OCI-LY7 (cell line): ENCODE measurements at regions of chr22 and their contacts with region 1.

Region 1: GRCh38 chr22:23800297-23801237 is 13.8 kb downstream of the SMARCB1 start:
- DNase-seq: peak; percentile 97
- H3K4me3 ChIP-seq: peak overlapping the region; percentile 32
- H3K27ac ChIP-seq: peak overlapping the region; percentile 97
- H3K4me1 ChIP-seq: peaks cover 80% of the 10 kb centered on the region
- CTCF ChIP-seq: no peak

Region 2: DNA sequence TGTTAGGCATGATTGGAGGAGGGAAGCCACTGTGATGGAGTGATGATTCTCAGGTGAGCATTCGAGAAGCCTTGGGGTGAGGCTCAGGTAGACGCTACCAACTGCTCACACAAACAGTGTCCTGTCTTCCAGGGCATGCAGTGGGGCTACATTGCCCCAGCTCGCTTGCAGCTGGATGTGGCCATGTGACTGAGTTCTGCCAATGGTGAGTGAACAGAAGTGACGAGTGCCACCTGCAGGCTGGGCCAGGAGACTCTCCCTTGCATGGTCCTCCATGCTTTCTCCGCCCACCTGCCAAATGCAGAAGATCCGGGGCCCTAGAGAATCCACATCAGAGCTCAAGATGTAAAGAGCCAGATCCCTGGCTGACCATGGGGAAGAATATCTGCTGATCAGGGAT is 424.3 kb before region 1 on chr22:
- CTCF ChIA-PET with region 1: no interaction called
- POLR2A ChIA-PET with region 1: no interaction called
- intact Hi-C with region 1: no loop called
- DNase-seq: peak; percentile 50
- H3K4me3 ChIP-seq: no peak overlapping the region
- H3K27ac ChIP-seq: no peak overlapping the region
- H3K4me1 ChIP-seq: no peaks in the 10 kb centered on the region
- CTCF ChIP-seq: peak; percentile 62

Region 3: DNA sequence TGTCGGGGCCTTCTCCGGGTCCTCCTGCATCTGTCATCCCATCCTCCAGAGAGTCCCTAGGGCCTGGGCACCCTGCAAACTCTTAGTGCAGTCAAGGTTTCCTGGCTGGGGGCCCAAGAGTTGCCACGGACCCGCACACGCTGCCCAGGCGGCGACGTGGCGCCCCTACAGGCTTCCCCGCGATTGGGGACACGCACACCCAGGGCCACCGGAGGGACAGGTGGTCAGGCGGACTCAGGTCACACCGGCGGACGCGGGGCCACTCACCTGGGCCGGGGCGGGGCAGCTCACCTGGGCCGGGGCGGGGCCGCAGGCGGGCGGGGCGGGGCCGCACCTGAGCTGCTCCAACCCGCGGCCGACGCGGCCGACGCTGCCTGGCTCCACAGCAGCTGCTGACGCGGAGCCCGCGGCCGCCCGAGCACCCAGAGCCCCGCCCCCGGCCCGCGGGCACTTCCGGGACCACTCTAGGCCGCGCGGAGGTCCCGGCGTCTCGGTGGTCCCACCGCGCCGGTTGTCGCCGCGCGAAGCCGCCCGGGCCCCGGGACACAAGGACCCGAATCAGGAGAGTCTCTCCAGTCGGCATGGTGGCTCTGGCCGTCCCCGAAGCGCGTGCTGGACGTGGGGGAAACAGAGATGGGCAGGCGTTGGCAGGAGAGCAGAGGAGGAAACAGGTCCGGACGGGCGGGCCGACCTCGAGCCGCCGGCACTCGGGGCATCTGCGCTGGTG is 49.7 kb before region 1 on chr22 and contains the start of gene ZNF70:
- CTCF ChIA-PET with region 1: no interaction called
- POLR2A ChIA-PET with region 1: interaction called, 4 read pairs
- intact Hi-C with region 1: loop called (anchors 1 kb)
- DNase-seq: peak; percentile 94
- H3K4me3 ChIP-seq: peak within 1 kb of the TSS; percentile 78
- H3K27ac ChIP-seq: peak within 1 kb of the TSS; percentile 95
- H3K4me1 ChIP-seq: peaks cover 40% of the 10 kb centered on the region
- CTCF ChIP-seq: peak; percentile 50
- total RNA-seq, gene ZNF70: 5.1 and 6.0 TPM in 2 replicates

Region 4: GRCh38 chr22:23786752-23787599 is 13.6 kb before region 1 on chr22 and contains the start of gene SMARCB1:
- CTCF ChIA-PET with region 1: interaction called, 3 read pairs
- POLR2A ChIA-PET with region 1: interaction called, 8 read pairs
- intact Hi-C with region 1: loop called (anchors 2 kb)
- DNase-seq: peak; percentile 94
- H3K4me3 ChIP-seq: peak within 1 kb of the TSS; percentile 75
- H3K27ac ChIP-seq: peak within 1 kb of the TSS; percentile 84
- H3K4me1 ChIP-seq: peaks cover 48% of the 10 kb centered on the region
- CTCF ChIP-seq: no peak
- total RNA-seq, gene SMARCB1: 265 and 297 TPM in 2 replicates

Region 5: GRCh38 chr22:23838681-23839468 is 38.3 kb after region 1 on chr22 and contains the start of gene DERL3:
- CTCF ChIA-PET with region 1: interaction called, 3 read pairs
- POLR2A ChIA-PET with region 1: interaction called, 17 read pairs
- intact Hi-C with region 1: loop called (anchors 1 kb)
- DNase-seq: peak; percentile 100
- H3K4me3 ChIP-seq: peak within 1 kb of the TSS; percentile 69
- H3K27ac ChIP-seq: peak within 1 kb of the TSS; percentile 83
- H3K4me1 ChIP-seq: peaks cover 60% of the 10 kb centered on the region
- CTCF ChIP-seq: no peak
- total RNA-seq, gene DERL3: 34.6 and 44.6 TPM in 2 replicates

Region 6: DNA sequence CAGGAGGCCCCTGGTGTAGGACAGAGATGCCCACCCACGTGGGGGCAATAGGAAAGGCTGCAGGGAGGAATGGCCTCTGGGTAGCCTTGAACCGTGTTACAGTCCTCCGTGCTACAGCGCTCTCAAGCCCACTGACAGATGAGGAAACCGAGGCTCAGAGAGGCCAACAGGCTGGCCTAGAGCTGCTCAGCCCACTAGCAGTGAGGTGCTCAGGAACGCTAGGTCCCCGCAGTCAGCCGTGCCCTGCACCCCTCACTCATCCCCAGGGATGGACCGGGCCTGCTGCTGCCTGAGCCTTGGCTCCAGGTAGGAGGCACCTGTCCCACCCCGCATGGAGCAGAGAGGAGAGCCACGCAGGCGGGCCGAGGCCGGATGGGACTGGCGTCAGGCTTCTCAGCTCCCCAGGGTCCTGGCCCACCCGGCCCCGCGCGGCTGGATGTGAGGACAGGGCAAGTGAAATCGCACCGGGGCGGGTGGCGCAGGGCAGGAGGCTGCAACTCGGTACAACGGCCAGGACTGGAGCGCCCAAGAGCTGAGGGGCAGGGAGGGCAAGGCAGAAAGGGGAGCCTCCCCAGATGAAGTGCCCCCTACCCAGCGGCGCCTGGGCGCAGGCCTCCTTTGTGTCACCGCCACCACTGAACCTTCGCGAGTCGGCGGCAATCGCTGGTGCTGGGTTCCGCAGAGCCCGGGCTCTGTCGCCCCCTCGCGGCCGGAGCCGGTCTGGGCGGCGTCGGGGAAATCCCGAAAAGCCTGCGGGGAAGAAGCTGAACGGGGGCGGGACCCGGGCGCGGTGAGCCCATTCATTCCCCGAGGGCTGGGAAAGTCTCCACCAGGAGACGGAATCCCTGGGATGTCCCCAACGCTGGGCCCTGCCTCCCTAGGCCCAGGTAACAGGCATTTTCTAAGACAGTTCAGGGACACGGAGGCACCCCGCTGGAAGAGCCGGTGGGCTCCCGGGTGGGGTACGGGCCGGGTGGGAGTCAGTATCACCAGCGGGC is 48.7 kb after region 1 on chr22:
- CTCF ChIA-PET with region 1: interaction called, 4 read pairs
- POLR2A ChIA-PET with region 1: interaction called, 17 read pairs
- intact Hi-C with region 1: loop called (anchors 1 kb)
- DNase-seq: peak; percentile 86
- H3K4me3 ChIP-seq: peak overlapping the region; percentile 54
- H3K27ac ChIP-seq: peak overlapping the region; percentile 82
- H3K4me1 ChIP-seq: peaks cover 75% of the 10 kb centered on the region
- CTCF ChIP-seq: peak; percentile 90

Region 7: GRCh38 chr22:24433813-24434470 is 633.4 kb after region 1 on chr22:
- CTCF ChIA-PET with region 1: no interaction called
- POLR2A ChIA-PET with region 1: no interaction called
- intact Hi-C with region 1: loop called (anchors 5 kb)
- DNase-seq: peak; percentile 92
- H3K4me3 ChIP-seq: peak overlapping the region; percentile 61
- H3K27ac ChIP-seq: peak overlapping the region; percentile 99
- H3K4me1 ChIP-seq: peaks cover 98% of the 10 kb centered on the region
- CTCF ChIP-seq: no peak